Esophagus squamous epithelium (tissue), 5 donors: ENCODE measurements at regions of chr14 and their contacts with region 1.

Region 1: DNA sequence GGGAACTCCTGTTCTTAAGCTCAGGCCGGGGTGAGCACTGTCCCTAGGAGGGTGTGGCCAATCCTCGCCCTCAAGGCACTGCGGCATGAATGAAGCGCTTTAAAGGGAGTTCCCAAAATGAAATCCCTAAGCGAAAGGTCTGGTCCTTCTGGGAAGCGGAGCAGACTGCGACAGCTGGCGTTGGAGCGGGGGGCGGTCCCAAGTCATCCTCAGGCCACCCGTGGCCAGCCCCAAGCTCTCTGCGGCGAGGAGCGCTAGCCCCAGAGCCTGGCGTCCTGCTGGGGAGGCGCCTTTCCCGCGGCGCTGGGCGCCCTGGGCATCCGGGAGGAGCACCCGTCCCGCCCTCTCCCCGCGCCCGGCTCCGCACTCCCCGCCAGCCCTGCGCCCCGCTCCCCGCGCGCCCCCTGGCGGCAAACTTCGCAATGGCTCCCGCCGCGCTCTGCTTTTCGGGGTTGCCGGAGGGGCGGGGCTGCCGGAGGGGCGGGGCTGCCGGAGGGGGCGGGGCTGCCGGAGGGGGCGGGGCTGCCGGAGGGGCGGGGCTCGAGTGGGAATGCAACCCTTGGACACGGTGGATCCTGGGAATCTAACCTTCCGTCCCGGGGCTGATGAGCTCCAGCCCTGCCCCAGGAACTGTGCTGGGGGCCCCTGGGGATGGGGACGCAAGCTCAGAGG is 25.4 kb downstream of the ZBTB42 start:
- DNase-seq: peak; percentile 46
- H3K4me3 ChIP-seq: peak overlapping the region; percentile 31 to 76 (median 55)
- H3K27ac ChIP-seq: peak overlapping the region; percentile 31 to 82 (median 76)
- H3K4me1 ChIP-seq: peaks cover 20 to 33% (median 21%) of the 10 kb centered on the region in 3 donors
- H3K27me3 ChIP-seq: peaks cover 0 to 6% (median 0%) of the 10 kb centered on the region in 4 donors
- CTCF ChIP-seq: peak; percentile 81 to 92 (median 86)
- POLR2A ChIP-seq: no peak

Region 2: GRCh38 chr14:104768437-104769323 is 57.6 kb before region 1 on chr14:
- intact Hi-C with region 1: loop called (anchors 5 kb)
- DNase-seq: peak; percentile 50
- H3K4me3 ChIP-seq: no peak overlapping the region
- H3K27ac ChIP-seq: peak overlapping the region in 3 of 4 donors; percentile 8 to 42 (median 11)
- H3K4me1 ChIP-seq: peaks cover 0 to 19% (median 7%) of the 10 kb centered on the region in 3 donors
- H3K27me3 ChIP-seq: no peaks in the 10 kb centered on the region
- CTCF ChIP-seq: peak; percentile 89 to 99 (median 92)
- POLR2A ChIP-seq: no peak